Astrocyte of the cerebellum (primary cell): ENCODE measurements at regions of chr1 and their contacts with region 1.

Region 1: DNA sequence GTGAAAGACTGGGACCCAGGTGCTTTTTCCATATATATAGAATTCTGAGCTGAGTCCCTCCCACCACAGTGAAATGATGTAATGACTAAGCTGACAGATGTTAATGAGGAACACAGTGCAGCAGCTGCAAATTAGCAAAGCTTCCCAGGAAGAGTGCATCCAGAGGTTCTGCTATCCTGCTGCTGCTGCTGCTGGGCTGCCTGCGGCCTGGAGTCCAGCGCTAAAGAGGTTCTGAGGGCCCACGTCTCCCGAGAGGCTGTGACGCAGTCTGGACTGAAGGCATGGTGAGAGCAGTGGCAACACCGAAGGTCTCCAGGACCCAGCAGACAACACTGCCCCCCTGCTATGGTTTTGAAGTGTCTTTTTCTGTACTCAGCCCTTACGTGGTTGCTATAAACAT is 63.9 kb downstream of the URB2 start:
- DNase-seq: no peak
- H3K4me3 ChIP-seq: no peak overlapping the region
- CTCF ChIP-seq: no peak

Region 2: DNA sequence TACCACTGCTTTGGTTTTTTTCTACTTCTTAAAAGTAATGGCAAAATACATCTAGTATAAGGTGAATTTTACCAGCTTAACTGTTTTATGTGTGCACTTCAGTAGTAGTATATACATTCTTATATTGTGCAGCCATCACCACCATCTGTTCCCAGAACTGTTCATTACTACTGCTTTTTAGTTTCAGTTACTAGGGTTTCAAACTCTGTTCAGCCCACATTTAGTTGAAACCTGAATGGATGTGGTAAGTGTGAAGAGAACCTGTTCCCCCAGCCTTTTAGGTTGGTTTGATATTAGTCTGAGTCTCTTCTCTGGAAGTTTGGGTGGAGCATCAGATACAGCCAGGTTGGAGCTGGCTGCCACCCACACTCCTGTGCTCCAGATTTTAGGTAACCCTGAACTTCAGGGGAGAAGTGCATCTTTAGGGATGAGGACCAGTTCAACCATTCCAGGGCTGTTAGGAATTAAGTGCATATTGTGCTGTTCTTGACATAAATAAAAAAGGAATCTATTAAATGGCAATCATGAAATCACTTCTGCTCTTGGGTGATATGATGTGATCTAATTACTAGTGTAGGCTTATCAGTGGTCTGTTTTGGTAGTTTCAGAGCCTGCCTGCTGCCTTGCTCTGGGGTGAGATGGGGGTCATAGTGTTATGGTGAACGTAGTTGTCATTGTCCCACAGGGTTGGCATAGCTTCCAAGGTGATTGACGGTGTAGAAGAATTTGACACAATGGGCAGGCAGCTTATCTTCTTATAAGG is 31.7 kb before region 1 on chr1:
- in situ Hi-C with region 1: no loop called
- DNase-seq: no peak
- H3K4me3 ChIP-seq: no peak overlapping the region
- CTCF ChIP-seq: no peak

Region 3: GRCh38 chr1:229732061-229732460 is 42.2 kb after region 1 on chr1:
- in situ Hi-C with region 1: no loop called
- DNase-seq: no peak
- H3K4me3 ChIP-seq: no peak overlapping the region
- CTCF ChIP-seq: no peak

Region 4: GRCh38 chr1:229781453-229781852 is 91.5 kb after region 1 on chr1:
- in situ Hi-C with region 1: loop called (anchors 5 kb)
- DNase-seq: no peak
- H3K4me3 ChIP-seq: no peak overlapping the region
- CTCF ChIP-seq: no peak

Region 5: GRCh38 chr1:229848752-229849677 is 159.1 kb after region 1 on chr1:
- in situ Hi-C with region 1: loop called (anchors 5 kb)
- DNase-seq: no peak
- H3K4me3 ChIP-seq: no peak overlapping the region
- CTCF ChIP-seq: peak; percentile 52

Region 6: GRCh38 chr1:230047114-230047865 is 357.4 kb after region 1 on chr1:
- in situ Hi-C with region 1: no loop called
- DNase-seq: no peak
- H3K4me3 ChIP-seq: no peak overlapping the region
- CTCF ChIP-seq: no peak